ENCODE measurements at regions of chr19 and their contacts with region 1.

Region 1: GRCh38 chr19:43743022-43743421 is 11.7 kb downstream of the SMG9 start:
- DNase-seq: no peak
- ATAC-seq: no peak
- H3K4me3 ChIP-seq: no peak overlapping the region
- H3K4me3 Mint-ChIP-seq: no peak overlapping the region
- H3K27ac ChIP-seq: no peak overlapping the region
- H3K27ac Mint-ChIP-seq: no peak overlapping the region
- H3K4me1 ChIP-seq: peaks cover 9 to 20% of the 10 kb centered on the region in 2 donors
- H3K4me1 Mint-ChIP-seq: peaks cover 21% of the 10 kb centered on the region
- H3K27me3 ChIP-seq: no peaks in the 10 kb centered on the region
- H3K27me3 Mint-ChIP-seq: no peaks in the 10 kb centered on the region
- CTCF ChIP-seq: no peak

Region 2: GRCh38 chr19:43503501-43504425 is 239.3 kb before region 1 on chr19:
- CTCF ChIA-PET with region 1: no interaction called
- POLR2A ChIA-PET with region 1: no interaction called
- intact Hi-C with region 1: no loop called
- DNase-seq: peak; percentile 97
- ATAC-seq: peak; percentile 95
- H3K4me3 ChIP-seq: peak overlapping the region; percentile 65 to 97 (median 76)
- H3K4me3 Mint-ChIP-seq: peak overlapping the region; percentile 95
- H3K27ac ChIP-seq: peak overlapping the region; percentile 80 to 82
- H3K27ac Mint-ChIP-seq: peak overlapping the region; percentile 98
- H3K4me1 ChIP-seq: peaks cover 12 to 22% of the 10 kb centered on the region in 2 donors
- H3K4me1 Mint-ChIP-seq: peaks cover 23% of the 10 kb centered on the region
- H3K27me3 ChIP-seq: no peaks in the 10 kb centered on the region
- H3K27me3 Mint-ChIP-seq: no peaks in the 10 kb centered on the region
- CTCF ChIP-seq: no peak

Region 3: GRCh38 chr19:43668406-43669158 is 74.4 kb before region 1 on chr19:
- CTCF ChIA-PET with region 1: interaction called, 10 read pairs
- POLR2A ChIA-PET with region 1: no interaction called
- intact Hi-C with region 1: no loop called
- DNase-seq: peak; percentile 92
- ATAC-seq: peak; percentile 85
- H3K4me3 ChIP-seq: peak overlapping the region; percentile 35 to 79 (median 59)
- H3K4me3 Mint-ChIP-seq: peak overlapping the region; percentile 84
- H3K27ac ChIP-seq: no peak overlapping the region
- H3K27ac Mint-ChIP-seq: peak overlapping the region; percentile 39
- H3K4me1 ChIP-seq: peaks cover 35 to 42% of the 10 kb centered on the region in 2 donors
- H3K4me1 Mint-ChIP-seq: peaks cover 37% of the 10 kb centered on the region
- H3K27me3 ChIP-seq: peaks cover 0 to 27% (median 7%) of the 10 kb centered on the region in 4 experiments
- H3K27me3 Mint-ChIP-seq: peaks cover 14% of the 10 kb centered on the region
- CTCF ChIP-seq: no peak

Region 4: DNA sequence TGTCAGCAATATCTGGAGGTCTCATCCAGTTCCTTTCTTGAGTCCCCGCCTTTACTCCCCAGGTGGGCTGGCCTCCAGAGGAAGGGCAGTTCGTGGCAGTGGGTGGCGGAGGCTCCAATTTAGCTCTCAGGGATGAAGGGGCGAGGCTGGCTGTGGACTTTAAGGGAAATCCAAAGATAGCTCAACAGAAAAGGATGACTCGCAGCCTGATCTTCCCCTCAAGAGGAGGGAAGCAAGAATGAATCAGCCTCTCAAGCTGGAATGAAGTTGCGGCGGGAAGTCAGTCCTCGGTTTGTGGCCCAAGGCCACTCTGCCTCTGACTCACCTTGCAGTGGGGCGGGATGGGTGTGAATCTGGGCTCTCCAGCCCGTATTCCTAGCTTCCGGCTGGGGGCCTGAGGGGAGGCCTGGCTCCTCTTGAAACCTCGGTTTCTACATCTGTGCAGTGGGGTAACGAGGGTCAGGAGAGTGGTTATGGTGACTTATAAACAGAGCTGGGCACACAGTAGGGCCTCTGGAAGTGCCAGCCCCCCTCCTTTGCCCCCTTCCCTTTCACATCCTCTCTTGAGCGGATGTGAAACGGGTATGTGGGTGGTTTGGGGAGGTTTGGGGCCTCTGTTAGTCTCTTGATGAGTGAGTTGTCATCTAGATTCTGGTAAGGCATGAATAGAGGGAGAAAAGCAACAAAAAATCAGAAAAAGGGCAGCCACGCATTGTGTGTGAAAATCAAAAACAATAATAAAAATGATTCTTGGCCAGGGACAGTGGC is 22.3 kb after region 1 on chr19:
- CTCF ChIA-PET with region 1: interaction called, 83 read pairs
- POLR2A ChIA-PET with region 1: interaction called, 4 read pairs
- intact Hi-C with region 1: loop called (anchors 1 kb)
- DNase-seq: peak; percentile 82
- ATAC-seq: peak; percentile 86
- H3K4me3 ChIP-seq: peak overlapping the region in 2 of 5 experiments; percentile 23 to 34
- H3K4me3 Mint-ChIP-seq: peak overlapping the region; percentile 72
- H3K27ac ChIP-seq: peak overlapping the region; percentile 88 to 92
- H3K27ac Mint-ChIP-seq: peak overlapping the region; percentile 87
- H3K4me1 ChIP-seq: peaks cover 42 to 57% of the 10 kb centered on the region in 2 donors
- H3K4me1 Mint-ChIP-seq: peaks cover 61% of the 10 kb centered on the region
- H3K27me3 ChIP-seq: no peaks in the 10 kb centered on the region
- H3K27me3 Mint-ChIP-seq: no peaks in the 10 kb centered on the region
- CTCF ChIP-seq: no peak

Region 5: DNA sequence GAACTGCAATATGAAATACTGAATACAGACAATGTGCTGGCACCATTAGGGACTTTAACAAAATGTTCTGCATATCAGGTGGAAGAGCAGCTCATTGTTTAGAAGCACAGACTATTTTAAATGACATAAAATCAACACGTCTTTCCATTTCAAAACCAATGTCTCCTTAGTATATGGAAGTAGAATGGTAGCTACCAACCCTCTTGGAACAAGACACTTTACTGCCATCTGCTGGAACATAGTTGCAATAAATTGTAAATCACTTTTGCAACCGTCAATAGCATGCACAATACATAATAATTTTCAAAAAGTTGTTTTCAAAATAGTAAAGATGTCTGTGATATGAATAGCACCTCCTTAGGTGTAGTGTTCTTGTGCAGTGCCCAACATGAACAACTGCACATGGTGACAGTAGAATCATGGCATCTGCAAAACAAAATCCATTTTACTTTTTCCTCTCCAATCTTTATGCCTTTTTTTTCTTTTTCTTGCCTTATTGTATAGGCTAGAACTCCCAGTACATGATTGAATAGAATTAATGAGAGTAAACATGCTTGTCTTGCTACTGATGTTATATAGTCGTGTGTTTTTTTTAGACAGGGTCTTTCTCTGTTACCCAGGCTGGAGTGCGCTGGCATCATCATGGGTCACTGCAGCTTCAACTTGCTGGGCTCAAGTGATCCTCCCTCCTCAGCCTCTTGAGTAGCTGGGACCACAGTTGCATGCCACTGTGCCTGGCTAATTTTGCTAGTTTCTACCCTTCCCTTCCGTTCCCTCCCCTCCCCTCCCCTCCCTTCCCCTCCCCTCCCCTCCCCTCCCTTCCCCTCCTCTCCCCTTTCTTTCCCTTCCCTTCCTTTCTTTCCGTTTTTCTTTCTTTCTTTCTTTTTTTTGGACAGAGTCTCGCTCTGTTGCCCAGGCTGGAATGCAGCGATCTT is 67.0 kb after region 1 on chr19:
- CTCF ChIA-PET with region 1: interaction called, 96 read pairs
- POLR2A ChIA-PET with region 1: no interaction called
- intact Hi-C with region 1: no loop called
- DNase-seq: peak; percentile 70
- ATAC-seq: peak; percentile 39
- H3K4me3 ChIP-seq: no peak overlapping the region
- H3K4me3 Mint-ChIP-seq: no peak overlapping the region
- H3K27ac ChIP-seq: no peak overlapping the region
- H3K27ac Mint-ChIP-seq: no peak overlapping the region
- H3K4me1 ChIP-seq: no peaks in the 10 kb centered on the region
- H3K4me1 Mint-ChIP-seq: no peaks in the 10 kb centered on the region
- H3K27me3 ChIP-seq: peaks cover 0 to 6% (median 1%) of the 10 kb centered on the region in 4 experiments
- H3K27me3 Mint-ChIP-seq: peaks cover 37% of the 10 kb centered on the region
- CTCF ChIP-seq: peak; percentile 83